ENCODE measurements at regions of chr5 and their contacts with region 1.

Region 1: GRCh38 chr5:1652596-1653345 is 129.0 kb upstream of the LPCAT1 start:
- DNase-seq: no peak
- ATAC-seq: peak in 1 of 2 donors; percentile 27

Region 2: GRCh38 chr5:1374680-1375055 is 278.1 kb before region 1 on chr5:
- intact Hi-C with region 1: loop called in 1 of 2 experiments (anchors 10 kb)
- DNase-seq: no peak
- ATAC-seq: no peak